Activated CD8-positive, alpha-beta T cell treated with anti-CD3 and anti-CD28 coated beads, Interleukin-2, amount 10 ng/mL, durations not matched to agents 7 days and 5 days (primary cell): ENCODE measurements at regions of chr13 and their contacts with region 1.

Region 1: GRCh38 chr13:40190641-40191100 is 475.8 kb downstream of the FOXO1 start:
- DNase-seq: peak; percentile 87
- ATAC-seq: peak; percentile 30
- H3K4me3 Mint-ChIP-seq: peak overlapping the region; percentile 40
- H3K27ac Mint-ChIP-seq: peak overlapping the region; percentile 98
- H3K4me1 Mint-ChIP-seq: peaks cover 64% of the 10 kb centered on the region
- H3K27me3 Mint-ChIP-seq: no peaks in the 10 kb centered on the region

Region 2: DNA sequence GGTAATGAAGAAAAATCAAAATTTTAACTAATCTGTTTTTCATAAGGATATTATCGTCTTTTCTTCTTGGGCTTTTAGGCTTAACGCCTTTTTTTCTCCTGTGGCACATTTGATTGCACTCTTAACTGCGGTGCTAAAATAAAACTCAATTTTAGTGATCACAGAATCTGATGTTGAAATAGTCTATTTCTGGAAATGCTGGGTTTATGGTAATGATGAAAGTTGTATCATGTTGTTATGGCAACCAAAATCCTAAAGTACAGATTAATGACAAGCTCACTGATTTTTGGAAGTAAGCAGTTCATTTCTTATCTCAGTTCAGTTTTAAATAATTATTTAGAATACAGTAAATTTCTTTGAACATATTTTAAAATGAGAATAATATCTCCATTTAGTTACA is 449.9 kb before region 1 on chr13:
- CTCF ChIA-PET with region 1: no interaction called
- POLR2A ChIA-PET with region 1: no interaction called
- DNase-seq: no peak
- ATAC-seq: no peak
- H3K4me3 Mint-ChIP-seq: no peak overlapping the region
- H3K27ac Mint-ChIP-seq: no peak overlapping the region
- H3K4me1 Mint-ChIP-seq: no peaks in the 10 kb centered on the region
- H3K27me3 Mint-ChIP-seq: no peaks in the 10 kb centered on the region

Region 3: GRCh38 chr13:40069173-40070044 is 121.3 kb before region 1 on chr13:
- CTCF ChIA-PET with region 1: interaction called, 28 read pairs
- POLR2A ChIA-PET with region 1: interaction called, 7 read pairs
- DNase-seq: peak; percentile 77
- ATAC-seq: peak; percentile 90
- H3K4me3 Mint-ChIP-seq: no peak overlapping the region
- H3K27ac Mint-ChIP-seq: no peak overlapping the region
- H3K4me1 Mint-ChIP-seq: peaks cover 25% of the 10 kb centered on the region
- H3K27me3 Mint-ChIP-seq: no peaks in the 10 kb centered on the region

Region 4: GRCh38 chr13:40172878-40173277 is 17.8 kb before region 1 on chr13:
- CTCF ChIA-PET with region 1: interaction called, 12 read pairs
- POLR2A ChIA-PET with region 1: interaction called, 6 read pairs
- DNase-seq: no peak
- ATAC-seq: no peak
- H3K4me3 Mint-ChIP-seq: no peak overlapping the region
- H3K27ac Mint-ChIP-seq: no peak overlapping the region
- H3K4me1 Mint-ChIP-seq: peaks cover 23% of the 10 kb centered on the region
- H3K27me3 Mint-ChIP-seq: peaks cover 3% of the 10 kb centered on the region

Region 5: GRCh38 chr13:40206241-40207000 is 15.8 kb after region 1 on chr13:
- CTCF ChIA-PET with region 1: interaction called, 40 read pairs
- POLR2A ChIA-PET with region 1: interaction called, 17 read pairs
- DNase-seq: peak; percentile 52
- ATAC-seq: peak; percentile 88
- H3K4me3 Mint-ChIP-seq: peak overlapping the region; percentile 37
- H3K27ac Mint-ChIP-seq: peak overlapping the region; percentile 98
- H3K4me1 Mint-ChIP-seq: peaks cover 36% of the 10 kb centered on the region
- H3K27me3 Mint-ChIP-seq: no peaks in the 10 kb centered on the region